PC-9 (cell line): ENCODE measurements at regions of chr2 and their contacts with region 1.

Region 1: GRCh38 chr2:195656859-195657633 is at the start of gene SLC39A10:
- DNase-seq: peak; percentile 91 to 93
- H3K4me3 ChIP-seq: peak within 1 kb of the TSS; percentile 68
- H3K27ac ChIP-seq: peak within 1 kb of the TSS; percentile 3; the same call in 1 of the 2 replicates
- H3K4me1 ChIP-seq: peaks cover 13% of the 10 kb centered on the region
- H3K27me3 ChIP-seq: no peaks in the 10 kb centered on the region
- CTCF ChIP-seq: no peak; the same call in 1 of the 2 replicates
- total RNA-seq, gene SLC39A10: 27.7 and 43.7 TPM in 2 replicates

Region 2: GRCh38 chr2:195318440-195319111 is 338.5 kb before region 1 on chr2:
- CTCF ChIA-PET with region 1: interaction called, 5 read pairs
- POLR2A ChIA-PET with region 1: no interaction called
- intact Hi-C with region 1: loop called (anchors 2 kb)
- DNase-seq: peak; percentile 19 to 37
- H3K4me3 ChIP-seq: no peak overlapping the region
- H3K27ac ChIP-seq: no peak overlapping the region
- H3K4me1 ChIP-seq: no peaks in the 10 kb centered on the region
- H3K27me3 ChIP-seq: no peaks in the 10 kb centered on the region
- CTCF ChIP-seq: peak; percentile 75

Region 3: GRCh38 chr2:195498176-195498575 is 158.9 kb before region 1 on chr2:
- CTCF ChIA-PET with region 1: interaction called, 4 read pairs
- POLR2A ChIA-PET with region 1: no interaction called
- intact Hi-C with region 1: loop called (anchors 5 kb)
- DNase-seq: no peak
- H3K4me3 ChIP-seq: no peak overlapping the region
- H3K27ac ChIP-seq: no peak overlapping the region
- H3K4me1 ChIP-seq: no peaks in the 10 kb centered on the region
- H3K27me3 ChIP-seq: no peaks in the 10 kb centered on the region
- CTCF ChIP-seq: peak; percentile 38

Region 4: GRCh38 chr2:195533771-195534642 is 123.0 kb before region 1 on chr2:
- CTCF ChIA-PET with region 1: interaction called, 9 read pairs
- POLR2A ChIA-PET with region 1: interaction called, 19 read pairs
- intact Hi-C with region 1: loop called (anchors 2 kb)
- DNase-seq: peak; percentile 47 to 61
- H3K4me3 ChIP-seq: no peak overlapping the region
- H3K27ac ChIP-seq: no peak overlapping the region
- H3K4me1 ChIP-seq: no peaks in the 10 kb centered on the region
- H3K27me3 ChIP-seq: no peaks in the 10 kb centered on the region
- CTCF ChIP-seq: no peak

Region 5: DNA sequence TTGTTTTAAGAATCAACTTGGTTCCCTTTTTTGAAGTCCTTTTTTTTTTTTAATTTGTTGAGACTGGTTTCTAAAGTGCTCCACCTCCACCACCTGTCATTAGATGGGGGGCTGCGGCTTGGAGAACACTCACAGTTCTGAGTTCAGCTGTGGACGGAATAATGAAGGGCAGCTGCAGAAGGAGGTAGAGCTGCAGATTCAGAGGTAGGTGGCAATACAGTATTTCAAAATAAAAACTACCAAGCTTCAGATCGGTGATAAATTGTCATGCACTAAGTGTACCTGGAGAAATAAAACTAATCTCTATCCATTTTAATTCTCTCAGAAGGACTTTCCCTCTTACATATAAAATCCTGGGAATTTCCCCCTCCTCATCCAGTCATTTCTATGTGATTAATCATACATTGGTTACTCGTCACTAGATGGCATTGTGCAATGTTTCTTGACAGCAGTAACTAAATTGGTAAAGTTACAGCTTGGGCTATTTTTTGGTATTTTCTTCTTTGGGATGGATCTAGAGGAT is 81.1 kb before region 1 on chr2:
- CTCF ChIA-PET with region 1: interaction called, 7 read pairs
- POLR2A ChIA-PET with region 1: no interaction called
- intact Hi-C with region 1: loop called (anchors 2 kb)
- DNase-seq: peak in 1 of 2 experiments; percentile 53
- H3K4me3 ChIP-seq: no peak overlapping the region
- H3K27ac ChIP-seq: no peak overlapping the region
- H3K4me1 ChIP-seq: peaks cover 10% of the 10 kb centered on the region
- H3K27me3 ChIP-seq: no peaks in the 10 kb centered on the region
- CTCF ChIP-seq: no peak

Region 6: GRCh38 chr2:195622956-195623355 is 34.1 kb before region 1 on chr2:
- CTCF ChIA-PET with region 1: no interaction called
- POLR2A ChIA-PET with region 1: interaction called, 21 read pairs
- intact Hi-C with region 1: no loop called
- DNase-seq: peak in 1 of 2 experiments; percentile 69
- H3K4me3 ChIP-seq: no peak overlapping the region
- H3K27ac ChIP-seq: no peak overlapping the region
- H3K4me1 ChIP-seq: no peaks in the 10 kb centered on the region
- H3K27me3 ChIP-seq: no peaks in the 10 kb centered on the region
- CTCF ChIP-seq: no peak

Region 7: GRCh38 chr2:195695002-195695631 is 38.1 kb after region 1 on chr2:
- CTCF ChIA-PET with region 1: no interaction called
- POLR2A ChIA-PET with region 1: no interaction called
- intact Hi-C with region 1: no loop called
- DNase-seq: no peak
- H3K4me3 ChIP-seq: no peak overlapping the region
- H3K27ac ChIP-seq: no peak overlapping the region
- H3K4me1 ChIP-seq: no peaks in the 10 kb centered on the region
- H3K27me3 ChIP-seq: no peaks in the 10 kb centered on the region
- CTCF ChIP-seq: no peak